Activated CD8-positive, alpha-beta T cell treated with anti-CD3 and anti-CD28 coated beads for 36 hours (primary cell): ENCODE measurements at regions of chr21 and their contacts with region 1.

Region 1: GRCh38 chr21:31580866-31581276 is 78.6 kb upstream of the SOD1 start:
- DNase-seq: peak; percentile 88
- ATAC-seq: peak; percentile 97
- H3K4me3 Mint-ChIP-seq: no peak overlapping the region
- H3K27ac Mint-ChIP-seq: no peak overlapping the region
- H3K4me1 Mint-ChIP-seq: no peaks in the 10 kb centered on the region
- H3K27me3 Mint-ChIP-seq: peaks cover 3% of the 10 kb centered on the region
- CTCF ChIP-seq: peak; percentile 88

Region 2: DNA sequence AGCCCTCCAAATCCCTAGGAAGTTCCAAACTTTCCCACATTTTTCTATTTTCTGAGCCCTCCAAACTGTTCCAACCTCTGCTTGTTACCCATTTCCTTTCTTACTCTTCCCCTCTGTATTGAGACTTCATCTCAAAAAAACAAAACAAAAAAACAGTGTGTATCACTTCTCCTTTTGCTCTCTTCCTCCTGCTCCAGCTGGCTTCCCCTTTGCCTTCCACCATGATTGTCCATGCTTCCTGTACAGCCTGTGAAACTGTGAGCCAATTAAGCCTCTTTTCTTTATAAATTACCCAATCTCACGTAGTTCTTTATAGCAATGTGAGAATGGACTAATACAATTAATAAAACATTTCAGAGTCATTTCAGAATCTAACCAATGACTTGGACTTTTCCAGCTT is 473.0 kb before region 1 on chr21:
- CTCF ChIA-PET with region 1: interaction called, 14 read pairs
- POLR2A ChIA-PET with region 1: no interaction called
- intact Hi-C with region 1: loop called (anchors 10 kb)
- DNase-seq: no peak
- ATAC-seq: no peak
- H3K4me3 Mint-ChIP-seq: no peak overlapping the region
- H3K27ac Mint-ChIP-seq: no peak overlapping the region
- H3K4me1 Mint-ChIP-seq: peaks cover 12% of the 10 kb centered on the region
- H3K27me3 Mint-ChIP-seq: no peaks in the 10 kb centered on the region
- CTCF ChIP-seq: no peak

Region 3: GRCh38 chr21:31173881-31174555 is 406.9 kb before region 1 on chr21:
- CTCF ChIA-PET with region 1: interaction called, 11 read pairs
- POLR2A ChIA-PET with region 1: no interaction called
- intact Hi-C with region 1: no loop called
- DNase-seq: no peak
- ATAC-seq: peak; percentile 28
- H3K4me3 Mint-ChIP-seq: no peak overlapping the region
- H3K27ac Mint-ChIP-seq: peak overlapping the region; percentile 54
- H3K4me1 Mint-ChIP-seq: peaks cover 52% of the 10 kb centered on the region
- H3K27me3 Mint-ChIP-seq: no peaks in the 10 kb centered on the region
- CTCF ChIP-seq: no peak

Region 4: GRCh38 chr21:31198575-31198974 is 382.3 kb before region 1 on chr21:
- CTCF ChIA-PET with region 1: interaction called, 74 read pairs
- POLR2A ChIA-PET with region 1: no interaction called
- intact Hi-C with region 1: loop called (anchors 1 kb)
- DNase-seq: no peak
- ATAC-seq: peak; percentile 58
- H3K4me3 Mint-ChIP-seq: no peak overlapping the region
- H3K27ac Mint-ChIP-seq: no peak overlapping the region
- H3K4me1 Mint-ChIP-seq: peaks cover 48% of the 10 kb centered on the region
- H3K27me3 Mint-ChIP-seq: no peaks in the 10 kb centered on the region
- CTCF ChIP-seq: peak; percentile 73

Region 5: DNA sequence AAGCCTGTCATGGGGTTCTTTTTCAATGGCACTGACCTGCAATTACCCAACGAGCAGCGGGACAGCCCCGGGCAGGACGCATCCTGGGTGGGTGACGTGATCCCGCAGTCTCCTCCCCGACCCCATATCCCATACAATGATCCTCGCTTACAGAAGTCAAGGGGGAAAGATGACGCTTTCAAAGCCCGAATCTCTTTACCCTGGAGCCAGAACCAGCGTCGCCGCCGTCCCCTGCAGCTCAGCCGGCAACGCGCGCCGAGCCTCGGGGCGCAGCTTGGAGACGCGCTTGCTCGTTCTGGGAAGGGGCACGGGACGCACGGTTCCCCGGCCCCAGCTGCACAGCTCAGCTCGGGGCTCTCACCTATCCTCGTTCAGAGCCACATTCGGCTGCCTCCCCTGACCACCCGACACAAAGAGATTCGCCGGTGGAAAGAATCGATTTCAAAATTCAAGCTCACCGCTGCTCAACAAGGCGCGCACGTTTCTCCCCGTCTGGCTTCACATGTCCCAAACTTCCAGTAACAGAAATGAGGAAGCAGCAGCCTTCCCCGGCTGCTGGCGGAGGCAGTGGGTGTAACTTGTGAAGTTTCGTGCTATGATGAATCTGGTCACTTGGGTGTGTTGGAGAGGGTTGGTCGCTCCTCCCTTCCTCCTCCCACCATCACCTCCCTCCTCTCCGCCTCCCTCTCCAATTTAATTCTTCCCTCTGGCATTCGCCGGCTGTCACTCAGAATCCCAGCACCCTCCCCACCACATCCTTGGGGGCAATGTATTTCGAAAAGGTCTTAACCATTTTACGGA is 237.0 kb before region 1 on chr21 and contains the start of gene TIAM1:
- CTCF ChIA-PET with region 1: interaction called, 14 read pairs
- POLR2A ChIA-PET with region 1: no interaction called
- intact Hi-C with region 1: no loop called
- DNase-seq: peak; percentile 47
- ATAC-seq: peak; percentile 73
- H3K4me3 Mint-ChIP-seq: peak within 1 kb of the TSS; percentile 84
- H3K27ac Mint-ChIP-seq: peak within 1 kb of the TSS; percentile 80
- H3K4me1 Mint-ChIP-seq: peaks cover 47% of the 10 kb centered on the region
- H3K27me3 Mint-ChIP-seq: peaks cover 3% of the 10 kb centered on the region
- CTCF ChIP-seq: no peak
- total RNA-seq, gene TIAM1: 34.9 to 38.5 TPM

Region 6: DNA sequence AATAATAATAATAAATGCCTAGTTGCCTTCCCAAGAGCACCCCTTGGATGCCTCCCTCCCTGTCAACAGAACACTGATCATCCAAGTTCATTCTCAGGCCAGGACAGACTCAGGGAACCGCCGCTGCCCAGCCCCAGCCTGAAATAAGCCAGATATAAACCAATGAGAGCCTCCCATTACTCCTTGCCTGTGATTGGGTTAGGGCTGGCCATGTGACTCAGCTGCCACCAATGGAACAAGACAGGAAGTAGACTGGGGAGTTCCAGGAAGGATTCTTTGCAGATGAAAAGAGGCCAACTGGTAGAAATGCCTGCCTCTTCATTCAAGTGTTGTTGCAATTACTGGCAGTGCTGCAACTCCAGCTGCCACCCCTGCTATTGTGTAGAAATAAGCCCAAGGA is 90.4 kb before region 1 on chr21:
- CTCF ChIA-PET with region 1: no interaction called
- POLR2A ChIA-PET with region 1: no interaction called
- intact Hi-C with region 1: no loop called
- DNase-seq: no peak
- ATAC-seq: no peak
- H3K4me3 Mint-ChIP-seq: no peak overlapping the region
- H3K27ac Mint-ChIP-seq: no peak overlapping the region
- H3K4me1 Mint-ChIP-seq: no peaks in the 10 kb centered on the region
- H3K27me3 Mint-ChIP-seq: no peaks in the 10 kb centered on the region
- CTCF ChIP-seq: no peak

Region 7: GRCh38 chr21:31558962-31559367 is 21.9 kb before region 1 on chr21:
- CTCF ChIA-PET with region 1: interaction called, 27 read pairs
- POLR2A ChIA-PET with region 1: interaction called, 3 read pairs
- intact Hi-C with region 1: no loop called
- DNase-seq: peak; percentile 93
- ATAC-seq: peak; percentile 85
- H3K4me3 Mint-ChIP-seq: peak overlapping the region; percentile 86
- H3K27ac Mint-ChIP-seq: no peak overlapping the region
- H3K4me1 Mint-ChIP-seq: peaks cover 34% of the 10 kb centered on the region
- H3K27me3 Mint-ChIP-seq: peaks cover 26% of the 10 kb centered on the region
- CTCF ChIP-seq: peak; percentile 27

Region 8: GRCh38 chr21:31604591-31605190 is 23.8 kb after region 1 on chr21:
- CTCF ChIA-PET with region 1: interaction called, 28 read pairs
- POLR2A ChIA-PET with region 1: no interaction called
- intact Hi-C with region 1: no loop called
- DNase-seq: peak; percentile 86
- ATAC-seq: peak; percentile 65
- H3K4me3 Mint-ChIP-seq: no peak overlapping the region
- H3K27ac Mint-ChIP-seq: no peak overlapping the region
- H3K4me1 Mint-ChIP-seq: peaks cover 5% of the 10 kb centered on the region
- H3K27me3 Mint-ChIP-seq: peaks cover 2% of the 10 kb centered on the region
- CTCF ChIP-seq: peak; percentile 79

Region 9: GRCh38 chr21:31713973-31714740 is 133.3 kb after region 1 on chr21:
- CTCF ChIA-PET with region 1: no interaction called
- POLR2A ChIA-PET with region 1: no interaction called
- intact Hi-C with region 1: no loop called
- DNase-seq: no peak
- ATAC-seq: peak; percentile 87
- H3K4me3 Mint-ChIP-seq: no peak overlapping the region
- H3K27ac Mint-ChIP-seq: peak overlapping the region; percentile 79
- H3K4me1 Mint-ChIP-seq: peaks cover 76% of the 10 kb centered on the region
- H3K27me3 Mint-ChIP-seq: no peaks in the 10 kb centered on the region
- CTCF ChIP-seq: no peak